Testis (tissue), 5 donors: ENCODE measurements at regions of chr16 and their contacts with region 1.

Region 1: GRCh38 chr16:74623214-74623842 is 16.4 kb upstream of the GLG1 start:
- DNase-seq: no peak
- H3K4me3 ChIP-seq: no peak overlapping the region
- H3K27ac ChIP-seq: no peak overlapping the region
- H3K4me1 ChIP-seq: no peaks in the 10 kb centered on the region
- H3K27me3 ChIP-seq: no peaks in the 10 kb centered on the region
- CTCF ChIP-seq: peak; percentile 11 to 51 (median 46)
- POLR2A ChIP-seq: no peak

Region 2: DNA sequence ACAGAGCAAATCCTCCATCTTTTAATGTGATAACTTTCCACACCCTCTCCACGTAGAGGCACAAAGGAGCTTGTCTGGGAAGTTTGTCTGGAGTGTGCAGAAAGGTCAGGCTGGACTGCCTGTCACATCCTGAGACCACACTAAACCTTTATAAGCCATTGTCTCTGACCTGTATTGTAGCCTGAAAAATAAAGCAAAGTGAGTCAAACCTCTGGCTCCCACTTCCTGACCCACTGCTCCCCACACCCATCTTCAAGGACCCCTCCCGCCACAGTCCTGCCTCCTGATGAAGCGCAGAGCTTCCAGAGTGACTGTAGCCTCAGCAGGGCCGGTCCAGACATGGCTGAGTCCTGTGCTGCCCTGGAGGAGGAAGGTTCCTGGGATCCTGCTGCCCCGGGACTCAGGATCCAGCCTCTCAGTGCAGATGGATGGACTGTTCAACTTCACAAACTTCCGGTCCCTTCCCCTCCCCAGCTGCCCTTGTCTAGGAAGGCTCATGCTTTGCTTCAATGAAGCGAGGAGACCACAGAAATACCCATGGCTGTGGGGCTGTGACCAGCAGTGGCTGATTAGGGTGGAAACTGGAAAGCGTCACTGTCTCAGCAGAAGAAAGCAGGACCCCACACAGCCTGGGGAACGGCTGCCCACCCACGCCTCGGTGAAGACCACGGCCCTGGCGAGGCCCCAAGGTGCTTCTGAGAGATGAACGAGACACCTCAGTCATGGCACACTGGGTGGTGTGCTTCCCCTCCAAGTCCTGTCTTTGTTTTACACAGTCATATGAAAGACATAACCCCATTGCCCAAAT is 171.2 kb before region 1 on chr16:
- intact Hi-C with region 1: loop called (anchors 10 kb)
- DNase-seq: no peak
- H3K4me3 ChIP-seq: no peak overlapping the region
- H3K27ac ChIP-seq: no peak overlapping the region
- H3K4me1 ChIP-seq: peaks cover 12% of the 10 kb centered on the region
- H3K27me3 ChIP-seq: no peaks in the 10 kb centered on the region
- CTCF ChIP-seq: no peak
- POLR2A ChIP-seq: no peak